ENCODE measurements at regions of chr14 and their contacts with region 1.

Region 1: DNA sequence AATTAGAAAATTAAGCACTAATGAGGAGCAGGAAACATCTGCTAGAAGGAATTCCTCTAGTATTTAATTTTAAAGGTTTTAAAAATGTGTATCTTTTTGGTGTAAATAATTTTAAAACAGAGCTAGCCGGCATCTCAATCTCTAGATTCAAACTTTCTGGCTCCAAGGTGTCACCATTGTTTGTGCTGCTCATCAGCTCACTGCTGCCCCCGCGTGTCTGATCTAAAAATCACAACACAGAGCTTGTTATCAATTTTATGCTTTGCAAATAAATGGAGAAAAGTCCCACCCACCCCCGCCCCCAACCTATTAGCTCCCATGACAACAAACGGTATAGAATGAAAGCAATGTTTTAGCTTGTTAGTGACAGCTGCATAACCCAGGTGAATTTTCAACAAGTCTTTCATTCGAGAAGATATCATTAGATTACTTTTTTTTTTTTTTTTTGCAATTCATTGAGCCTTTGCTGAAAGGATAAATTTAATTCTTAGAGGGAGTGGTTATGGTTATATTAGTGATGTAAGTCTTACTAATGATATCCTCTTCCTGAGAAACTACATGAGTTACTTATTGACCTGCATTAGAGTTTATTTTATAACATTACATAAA is 11.3 kb upstream of the ABHD12B start:
- DNase-seq: peak; percentile 92
- H3K4me3 ChIP-seq: peak overlapping the region; percentile 49 to 72 (median 65)
- H3K27ac ChIP-seq: peak overlapping the region; percentile 78
- H3K4me1 ChIP-seq: peaks cover 10% of the 10 kb centered on the region
- H3K27me3 ChIP-seq: peaks cover 0 to 2% of the 10 kb centered on the region in 2 experiments
- CTCF ChIP-seq: peak; percentile 54 to 57
- POLR2A ChIP-seq: no peak

Region 2: DNA sequence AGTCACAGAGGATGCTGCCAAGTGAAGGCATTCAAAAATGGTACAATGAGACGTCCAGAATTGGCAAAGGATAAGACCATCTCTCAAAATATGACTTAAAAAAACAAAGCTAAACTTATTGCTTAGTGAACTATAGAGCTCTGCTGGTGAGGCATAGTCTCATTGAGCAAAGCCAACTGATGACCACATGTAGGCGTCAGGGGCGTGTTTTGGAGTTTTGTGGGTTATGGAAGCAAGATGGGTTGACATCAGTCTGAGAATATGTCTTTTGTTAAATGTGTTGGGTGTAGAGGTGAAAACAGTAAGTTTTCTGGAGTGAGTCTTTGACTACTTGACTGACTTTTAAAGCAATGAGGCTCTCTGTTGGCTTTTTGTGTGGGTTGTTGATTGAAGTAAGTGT is 253.4 kb before region 1 on chr14:
- CTCF ChIA-PET with region 1: interaction called, 18 read pairs
- POLR2A ChIA-PET with region 1: no interaction called
- dilution Hi-C with region 1: no loop called
- intact Hi-C with region 1: no loop called
- DNase-seq: no peak
- H3K4me3 ChIP-seq: no peak overlapping the region
- H3K27ac ChIP-seq: no peak overlapping the region
- H3K4me1 ChIP-seq: peaks cover 16% of the 10 kb centered on the region
- H3K27me3 ChIP-seq: no peaks in the 10 kb centered on the region
- CTCF ChIP-seq: no peak
- POLR2A ChIP-seq: no peak

Region 3: DNA sequence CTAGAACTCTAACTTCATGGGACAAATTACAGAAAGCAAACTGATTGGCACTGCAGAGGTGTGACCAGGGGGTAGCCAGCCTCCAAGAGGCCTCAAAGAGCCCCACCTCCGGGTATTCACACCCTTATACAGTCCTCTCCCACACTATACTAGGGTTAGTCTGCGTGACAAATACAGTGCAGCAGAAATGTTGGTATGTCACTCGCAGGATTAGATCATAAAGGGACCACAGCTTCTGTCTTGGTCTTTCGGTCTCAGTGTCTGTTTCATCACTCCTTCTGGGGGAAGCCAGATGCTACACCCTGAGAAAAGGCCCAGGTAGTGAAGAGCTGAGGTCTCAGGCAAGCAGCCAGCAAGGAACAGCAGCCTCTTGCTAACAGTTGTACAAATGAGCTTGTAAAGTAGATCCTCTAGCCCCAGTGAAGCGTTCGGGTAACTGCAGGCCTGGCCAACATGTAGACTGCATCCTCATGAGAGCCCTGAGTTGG is 123.6 kb before region 1 on chr14:
- CTCF ChIA-PET with region 1: interaction called, 30 read pairs
- POLR2A ChIA-PET with region 1: no interaction called
- dilution Hi-C with region 1: no loop called
- intact Hi-C with region 1: no loop called
- DNase-seq: no peak
- H3K4me3 ChIP-seq: no peak overlapping the region
- H3K27ac ChIP-seq: no peak overlapping the region
- H3K4me1 ChIP-seq: peaks cover 11% of the 10 kb centered on the region
- H3K27me3 ChIP-seq: no peaks in the 10 kb centered on the region
- CTCF ChIP-seq: no peak
- POLR2A ChIP-seq: no peak

Region 4: DNA sequence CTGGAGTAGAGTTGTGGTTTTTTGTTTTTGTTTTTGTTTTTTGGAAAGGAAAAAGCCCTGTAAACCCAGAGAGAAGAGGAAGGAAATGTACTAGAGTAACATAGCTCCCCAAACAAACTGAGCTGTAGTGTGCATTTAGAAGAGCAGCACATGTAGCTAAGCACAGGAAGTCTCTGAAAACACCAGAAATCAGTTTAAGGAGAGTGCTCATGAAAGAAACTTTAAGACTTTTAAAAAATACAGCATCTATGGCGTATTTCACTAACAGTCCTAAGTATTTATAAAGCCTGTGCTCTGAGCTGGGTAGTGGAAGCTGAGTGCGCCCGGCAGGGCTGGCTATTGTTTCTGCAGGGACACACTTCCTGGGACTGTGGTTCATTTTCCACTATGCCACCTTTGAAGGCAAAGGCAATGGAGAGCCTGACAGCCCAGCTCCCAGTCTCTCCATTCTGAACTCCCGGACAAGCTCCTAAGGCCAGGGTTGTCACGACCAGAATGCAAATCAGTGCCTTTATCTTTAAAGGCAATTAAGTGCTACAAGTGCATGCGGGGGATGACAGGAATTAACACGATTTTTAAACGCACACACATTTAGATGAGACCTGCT is 75.0 kb before region 1 on chr14:
- CTCF ChIA-PET with region 1: interaction called, 20 read pairs
- POLR2A ChIA-PET with region 1: no interaction called
- dilution Hi-C with region 1: no loop called
- intact Hi-C with region 1: no loop called
- DNase-seq: no peak
- H3K4me3 ChIP-seq: no peak overlapping the region
- H3K27ac ChIP-seq: no peak overlapping the region
- H3K4me1 ChIP-seq: peaks cover 19% of the 10 kb centered on the region
- H3K27me3 ChIP-seq: no peaks in the 10 kb centered on the region
- CTCF ChIP-seq: no peak
- POLR2A ChIP-seq: no peak

Region 5: GRCh38 chr14:50830932-50831725 is 29.5 kb before region 1 on chr14 and contains the start of gene NIN:
- CTCF ChIA-PET with region 1: interaction called, 72 read pairs
- POLR2A ChIA-PET with region 1: interaction called, 5 read pairs
- dilution Hi-C with region 1: no loop called
- intact Hi-C with region 1: loop called (anchors 1 kb)
- DNase-seq: peak; percentile 71
- H3K4me3 ChIP-seq: peak within 1 kb of the TSS; percentile 67 to 92 (median 69)
- H3K27ac ChIP-seq: peak within 1 kb of the TSS; percentile 61
- H3K4me1 ChIP-seq: peaks cover 20% of the 10 kb centered on the region
- H3K27me3 ChIP-seq: no peaks in the 10 kb centered on the region
- CTCF ChIP-seq: no peak
- POLR2A ChIP-seq: peak; percentile 60
- total RNA-seq, gene NIN: 68.2 and 76.3 TPM in 2 replicates

Region 6: GRCh38 chr14:51035611-51036213 is 175.1 kb after region 1 on chr14:
- CTCF ChIA-PET with region 1: no interaction called
- POLR2A ChIA-PET with region 1: no interaction called
- dilution Hi-C with region 1: no loop called
- intact Hi-C with region 1: no loop called
- DNase-seq: no peak
- H3K4me3 ChIP-seq: no peak overlapping the region
- H3K27ac ChIP-seq: no peak overlapping the region
- H3K4me1 ChIP-seq: no peaks in the 10 kb centered on the region
- H3K27me3 ChIP-seq: peaks cover 4 to 16% of the 10 kb centered on the region in 2 experiments
- CTCF ChIP-seq: no peak
- POLR2A ChIP-seq: no peak

Measured in endothelial cell of umbilical vein (primary cell).